ENCODE measurements at regions of chr20 and their contacts with region 1.

Region 1: GRCh38 chr20:35711588-35712209 is 12.5 kb downstream of the ROMO1 start:
- DNase-seq: no peak
- ATAC-seq: no peak
- H3K4me3 ChIP-seq: no peak overlapping the region
- H3K4me3 Mint-ChIP-seq: peak overlapping the region; percentile 2 to 60 (median 51)
- H3K27ac ChIP-seq: peak overlapping the region; percentile 53
- H3K27ac Mint-ChIP-seq: peak overlapping the region; percentile 36 to 89 (median 75)
- H3K4me1 ChIP-seq: peaks cover 16 to 29% of the 10 kb centered on the region in 2 donors
- H3K4me1 Mint-ChIP-seq: peaks cover 28 to 72% (median 59%) of the 10 kb centered on the region in 7 donors
- H3K27me3 ChIP-seq: no peaks in the 10 kb centered on the region
- H3K27me3 Mint-ChIP-seq: no peaks in the 10 kb centered on the region

Region 2: GRCh38 chr20:35657271-35657670 is 54.4 kb before region 1 on chr20:
- CTCF ChIA-PET with region 1: no interaction called
- POLR2A ChIA-PET with region 1: no interaction called
- intact Hi-C with region 1: no loop called
- DNase-seq: peak in 1 of 9 donors; percentile 12
- ATAC-seq: no peak
- H3K4me3 ChIP-seq: no peak overlapping the region
- H3K4me3 Mint-ChIP-seq: peak overlapping the region; percentile 49 to 94 (median 60)
- H3K27ac ChIP-seq: peak overlapping the region; percentile 23
- H3K27ac Mint-ChIP-seq: peak overlapping the region in 6 of 9 donors; percentile 45 to 86 (median 76)
- H3K4me1 ChIP-seq: peaks cover 56 to 60% of the 10 kb centered on the region in 2 donors
- H3K4me1 Mint-ChIP-seq: peaks cover 36 to 65% (median 58%) of the 10 kb centered on the region in 7 donors
- H3K27me3 ChIP-seq: no peaks in the 10 kb centered on the region
- H3K27me3 Mint-ChIP-seq: no peaks in the 10 kb centered on the region

Region 3: DNA sequence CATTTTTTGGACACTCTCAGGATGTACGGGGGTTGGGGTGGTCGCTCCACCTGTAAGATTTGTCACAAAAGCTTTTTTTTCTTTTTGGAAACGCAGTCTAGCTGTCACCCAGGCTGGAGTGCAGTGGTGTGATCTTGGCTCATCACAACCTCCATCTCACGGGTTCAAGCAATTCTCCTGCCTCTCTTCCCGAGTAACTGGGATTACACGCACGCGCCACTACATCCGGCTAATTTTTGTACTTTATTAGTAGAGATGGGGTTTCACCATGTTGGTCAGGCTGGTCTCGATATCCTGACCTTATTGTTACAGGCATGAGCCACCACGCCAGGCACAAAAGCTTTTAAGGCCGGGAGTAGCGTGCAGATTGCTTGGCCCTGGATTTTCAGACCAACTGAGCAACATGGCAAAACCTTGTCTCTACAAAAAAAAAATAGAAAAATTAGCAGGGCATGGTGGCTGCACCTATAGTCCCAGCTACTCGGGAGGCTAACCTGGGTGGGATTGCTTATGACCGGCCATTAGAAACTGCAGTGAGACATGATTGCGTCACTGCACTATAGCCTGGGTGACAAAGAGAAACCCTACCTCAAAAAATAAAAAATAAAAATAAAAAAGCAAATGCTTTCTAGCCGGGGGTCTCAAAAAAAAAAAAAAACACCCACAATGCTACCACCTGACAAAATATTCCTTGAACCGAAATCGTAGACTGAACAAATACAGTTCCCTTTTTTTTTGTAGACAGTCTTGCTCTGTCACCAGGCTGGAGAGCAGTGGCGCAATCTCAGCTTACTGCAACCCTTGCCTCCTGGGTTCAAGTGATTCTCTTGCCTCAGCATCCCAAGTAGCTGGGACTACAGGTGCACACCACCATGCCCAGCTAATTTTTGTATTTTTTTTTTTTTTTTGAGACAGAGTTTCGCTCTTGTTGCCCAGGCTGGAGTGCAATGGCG is 15.3 kb after region 1 on chr20:
- CTCF ChIA-PET with region 1: no interaction called
- POLR2A ChIA-PET with region 1: interaction called, 6 read pairs
- intact Hi-C with region 1: loop called in 1 of 2 experiments (anchors 2 kb)
- DNase-seq: no peak
- ATAC-seq: no peak
- H3K4me3 ChIP-seq: no peak overlapping the region
- H3K4me3 Mint-ChIP-seq: peak overlapping the region in 1 of 10 donors; percentile 8
- H3K27ac ChIP-seq: no peak overlapping the region
- H3K27ac Mint-ChIP-seq: peak overlapping the region in 2 of 9 donors; percentile 26 to 43
- H3K4me1 ChIP-seq: peaks cover 19 to 35% of the 10 kb centered on the region in 2 donors
- H3K4me1 Mint-ChIP-seq: peaks cover 15 to 67% (median 46%) of the 10 kb centered on the region in 7 donors
- H3K27me3 ChIP-seq: no peaks in the 10 kb centered on the region
- H3K27me3 Mint-ChIP-seq: no peaks in the 10 kb centered on the region